ENCODE measurements at regions of chr3 and their contacts with region 1.

Region 1: DNA sequence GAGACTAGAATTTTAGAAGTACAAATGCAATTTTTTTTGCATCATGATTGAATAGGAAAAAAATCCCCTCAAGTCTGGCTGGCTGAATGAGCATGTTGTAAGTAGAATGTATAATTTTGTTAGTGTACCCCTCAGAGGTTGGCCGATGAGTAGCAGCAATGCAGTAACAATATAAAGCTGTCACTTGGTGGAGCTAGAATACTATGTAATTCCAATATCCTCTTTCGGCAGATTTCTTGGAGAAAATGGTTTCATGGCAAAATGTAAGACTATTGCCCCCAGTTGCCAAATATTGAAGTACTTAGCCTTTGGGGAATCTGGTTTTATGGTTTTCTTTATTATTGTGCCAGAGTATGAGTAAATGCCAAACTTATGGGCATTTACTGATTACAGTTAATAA is 39.8 kb upstream of the SGO1 start:
- DNase-seq: peak in 3 of 4 experiments; percentile 17 to 70 (median 37)
- ATAC-seq: peak; percentile 97
- H3K4me3 ChIP-seq: no peak overlapping the region
- H3K27ac ChIP-seq: no peak overlapping the region
- H3K4me1 ChIP-seq: no peaks in the 10 kb centered on the region
- H3K27me3 ChIP-seq: no peaks in the 10 kb centered on the region
- CTCF ChIP-seq: peak; percentile 81 to 96 (median 85)
- EP300 ChIP-seq: no peak
- POLR2A ChIP-seq: no peak
- RAD21 ChIP-seq: peak; percentile 88 to 95

Region 2: GRCh38 chr3:19725000-19725399 is 500.8 kb before region 1 on chr3:
- CTCF ChIA-PET with region 1: no interaction called
- POLR2A ChIA-PET with region 1: no interaction called
- in situ Hi-C with region 1: no loop called
- intact Hi-C with region 1: loop called (anchors 10 kb)
- DNase-seq: no peak
- ATAC-seq: no peak
- H3K4me3 ChIP-seq: no peak overlapping the region
- H3K27ac ChIP-seq: no peak overlapping the region
- H3K4me1 ChIP-seq: no peaks in the 10 kb centered on the region
- H3K27me3 ChIP-seq: no peaks in the 10 kb centered on the region
- CTCF ChIP-seq: no peak
- EP300 ChIP-seq: no peak
- POLR2A ChIP-seq: no peak
- RAD21 ChIP-seq: no peak

Region 3: GRCh38 chr3:20254268-20255117 is 28.7 kb after region 1 on chr3:
- CTCF ChIA-PET with region 1: no interaction called
- POLR2A ChIA-PET with region 1: no interaction called
- in situ Hi-C with region 1: no loop called
- intact Hi-C with region 1: no loop called
- DNase-seq: no peak
- ATAC-seq: peak; percentile 23
- H3K4me3 ChIP-seq: no peak overlapping the region
- H3K27ac ChIP-seq: no peak overlapping the region
- H3K4me1 ChIP-seq: no peaks in the 10 kb centered on the region; a peak in 1 of 5 replicates
- H3K27me3 ChIP-seq: no peaks in the 10 kb centered on the region
- CTCF ChIP-seq: no peak
- EP300 ChIP-seq: no peak
- POLR2A ChIP-seq: no peak
- RAD21 ChIP-seq: no peak

Region 4: GRCh38 chr3:20511863-20512505 is 286.2 kb after region 1 on chr3:
- CTCF ChIA-PET with region 1: no interaction called
- POLR2A ChIA-PET with region 1: no interaction called
- in situ Hi-C with region 1: no loop called
- intact Hi-C with region 1: loop called (anchors 5 kb)
- DNase-seq: peak in 3 of 4 experiments; percentile 16 to 60 (median 31)
- ATAC-seq: peak; percentile 90
- H3K4me3 ChIP-seq: no peak overlapping the region
- H3K27ac ChIP-seq: no peak overlapping the region
- H3K4me1 ChIP-seq: no peaks in the 10 kb centered on the region
- H3K27me3 ChIP-seq: no peaks in the 10 kb centered on the region
- CTCF ChIP-seq: peak; percentile 44 to 69 (median 59); a peak in 4 of 6 replicates
- EP300 ChIP-seq: no peak
- POLR2A ChIP-seq: no peak
- RAD21 ChIP-seq: peak; percentile 86 to 87

Region 5: GRCh38 chr3:20546413-20547035 is 320.8 kb after region 1 on chr3:
- CTCF ChIA-PET with region 1: no interaction called
- POLR2A ChIA-PET with region 1: no interaction called
- in situ Hi-C with region 1: no loop called
- intact Hi-C with region 1: no loop called
- DNase-seq: no peak
- ATAC-seq: no peak
- H3K4me3 ChIP-seq: no peak overlapping the region
- H3K27ac ChIP-seq: no peak overlapping the region
- H3K4me1 ChIP-seq: no peaks in the 10 kb centered on the region; a peak in 1 of 5 replicates
- H3K27me3 ChIP-seq: no peaks in the 10 kb centered on the region
- CTCF ChIP-seq: no peak
- EP300 ChIP-seq: no peak
- POLR2A ChIP-seq: no peak
- RAD21 ChIP-seq: no peak

Region 6: DNA sequence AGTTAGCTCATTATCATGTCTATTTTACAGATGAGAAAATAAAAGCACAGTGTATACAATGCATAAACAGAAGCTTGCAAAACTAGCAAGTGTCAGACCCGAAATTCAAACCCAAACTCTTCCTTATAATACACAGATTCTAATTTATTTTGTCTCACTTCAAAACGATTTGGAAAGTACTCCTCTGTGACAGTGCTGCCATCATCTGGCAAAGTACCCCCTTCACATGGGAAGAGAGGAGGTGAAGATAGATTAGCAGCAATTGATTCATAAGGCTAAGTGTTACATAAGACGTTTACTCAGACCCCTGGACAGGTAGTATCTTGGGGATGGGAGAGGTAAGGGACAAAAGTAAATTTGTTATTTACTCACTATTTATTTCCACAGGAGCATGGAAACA is 704.3 kb after region 1 on chr3:
- CTCF ChIA-PET with region 1: interaction called, 4 read pairs
- POLR2A ChIA-PET with region 1: no interaction called
- in situ Hi-C with region 1: no loop called
- intact Hi-C with region 1: loop called (anchors 5 kb)
- DNase-seq: peak; percentile 14 to 41 (median 26)
- ATAC-seq: peak; percentile 83
- H3K4me3 ChIP-seq: no peak overlapping the region
- H3K27ac ChIP-seq: no peak overlapping the region
- H3K4me1 ChIP-seq: no peaks in the 10 kb centered on the region
- H3K27me3 ChIP-seq: no peaks in the 10 kb centered on the region
- CTCF ChIP-seq: peak; percentile 34 to 60 (median 55); a peak in 4 of 6 replicates
- EP300 ChIP-seq: no peak
- POLR2A ChIP-seq: no peak
- RAD21 ChIP-seq: peak; percentile 52 to 76

Region 7: DNA sequence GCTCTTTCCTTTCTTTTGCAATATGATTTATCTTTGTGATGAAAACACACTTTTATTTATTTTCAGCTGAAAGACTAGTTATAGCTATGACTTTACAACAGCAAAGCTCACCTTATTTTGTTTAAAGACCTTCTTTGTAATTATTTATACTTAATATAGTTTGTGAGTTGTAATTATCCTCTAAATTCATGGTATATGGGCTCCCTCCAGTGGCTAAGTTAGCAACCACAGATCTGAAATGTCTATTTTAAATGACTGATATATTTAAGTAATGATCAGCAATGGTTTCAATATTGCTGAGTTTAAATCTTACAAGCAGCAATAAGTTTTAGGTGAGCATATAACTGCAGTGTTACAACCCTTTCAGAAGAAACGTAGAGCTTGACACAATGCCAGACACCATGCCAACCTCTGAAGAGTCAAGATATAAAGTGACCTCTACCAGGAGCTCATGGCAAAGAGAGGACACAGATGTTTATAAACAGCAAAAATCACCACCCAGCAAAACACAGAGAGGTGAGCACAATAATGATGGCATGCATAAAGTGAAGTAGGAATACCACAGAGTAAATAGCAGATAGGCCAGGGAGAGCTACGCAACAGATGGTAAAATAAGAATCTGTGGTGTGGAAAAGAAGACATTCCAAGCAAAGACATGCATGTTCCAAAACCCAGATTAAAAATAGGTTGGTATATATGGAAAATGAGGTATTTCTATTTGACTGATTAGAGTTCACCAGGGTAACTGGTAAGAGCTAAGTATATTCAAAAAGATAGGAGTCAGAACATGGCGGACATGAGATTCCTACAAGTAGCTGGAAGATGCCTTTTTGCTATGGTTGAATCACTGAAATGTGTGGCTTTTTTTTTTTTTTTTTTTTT is 1668.9 kb after region 1 on chr3:
- CTCF ChIA-PET with region 1: no interaction called
- POLR2A ChIA-PET with region 1: no interaction called
- in situ Hi-C with region 1: no loop called
- intact Hi-C with region 1: loop called (anchors 10 kb)
- DNase-seq: peak in 1 of 4 experiments; percentile 1
- ATAC-seq: no peak
- H3K4me3 ChIP-seq: no peak overlapping the region
- H3K27ac ChIP-seq: no peak overlapping the region
- H3K4me1 ChIP-seq: no peaks in the 10 kb centered on the region
- H3K27me3 ChIP-seq: no peaks in the 10 kb centered on the region
- CTCF ChIP-seq: peak in 1 of 3 experiments; percentile 35; a peak in 2 of 6 replicates
- EP300 ChIP-seq: no peak
- POLR2A ChIP-seq: no peak
- RAD21 ChIP-seq: peak; percentile 39 to 52

Region 8: DNA sequence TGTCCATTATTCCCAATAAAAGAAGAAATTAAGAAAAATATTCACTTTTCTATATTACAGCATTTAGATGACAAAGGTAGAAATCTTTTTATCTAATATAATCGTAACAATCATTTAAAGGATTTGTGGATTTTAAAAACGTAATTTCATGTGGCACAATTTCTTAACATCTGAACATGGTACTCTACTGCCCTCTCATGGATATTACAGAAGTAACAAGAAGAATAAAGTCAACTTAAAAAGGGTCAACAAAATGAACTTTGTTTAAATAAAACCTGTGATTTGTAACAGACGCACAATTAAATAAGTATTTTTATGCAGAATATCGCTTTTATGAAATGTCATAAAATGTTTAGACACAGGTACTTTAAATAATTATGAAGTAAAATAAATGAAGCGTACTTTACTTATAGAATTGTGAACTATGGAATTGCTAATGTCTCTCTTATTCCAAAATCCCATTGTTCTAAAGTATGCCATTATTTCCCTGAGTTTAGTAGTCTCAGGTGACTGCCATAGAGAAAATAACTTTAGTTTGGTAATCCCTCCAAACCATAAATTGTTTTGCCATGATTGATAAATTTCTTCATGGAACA is 1892.1 kb after region 1 on chr3:
- CTCF ChIA-PET with region 1: interaction called, 5 read pairs
- POLR2A ChIA-PET with region 1: interaction called, 3 read pairs
- in situ Hi-C with region 1: no loop called
- intact Hi-C with region 1: loop called (anchors 2 kb)
- DNase-seq: peak; percentile 7 to 47 (median 12)
- ATAC-seq: no peak
- H3K4me3 ChIP-seq: no peak overlapping the region
- H3K27ac ChIP-seq: no peak overlapping the region
- H3K4me1 ChIP-seq: no peaks in the 10 kb centered on the region
- H3K27me3 ChIP-seq: no peaks in the 10 kb centered on the region
- CTCF ChIP-seq: peak; percentile 6 to 65 (median 26); a peak in 3 of 6 replicates
- EP300 ChIP-seq: no peak
- POLR2A ChIP-seq: no peak
- RAD21 ChIP-seq: peak; percentile 74 to 81

Measured in K562 (cell line).